HepG2 (cell line): ENCODE measurements at regions of chr7 and their contacts with region 1.

Region 1: DNA sequence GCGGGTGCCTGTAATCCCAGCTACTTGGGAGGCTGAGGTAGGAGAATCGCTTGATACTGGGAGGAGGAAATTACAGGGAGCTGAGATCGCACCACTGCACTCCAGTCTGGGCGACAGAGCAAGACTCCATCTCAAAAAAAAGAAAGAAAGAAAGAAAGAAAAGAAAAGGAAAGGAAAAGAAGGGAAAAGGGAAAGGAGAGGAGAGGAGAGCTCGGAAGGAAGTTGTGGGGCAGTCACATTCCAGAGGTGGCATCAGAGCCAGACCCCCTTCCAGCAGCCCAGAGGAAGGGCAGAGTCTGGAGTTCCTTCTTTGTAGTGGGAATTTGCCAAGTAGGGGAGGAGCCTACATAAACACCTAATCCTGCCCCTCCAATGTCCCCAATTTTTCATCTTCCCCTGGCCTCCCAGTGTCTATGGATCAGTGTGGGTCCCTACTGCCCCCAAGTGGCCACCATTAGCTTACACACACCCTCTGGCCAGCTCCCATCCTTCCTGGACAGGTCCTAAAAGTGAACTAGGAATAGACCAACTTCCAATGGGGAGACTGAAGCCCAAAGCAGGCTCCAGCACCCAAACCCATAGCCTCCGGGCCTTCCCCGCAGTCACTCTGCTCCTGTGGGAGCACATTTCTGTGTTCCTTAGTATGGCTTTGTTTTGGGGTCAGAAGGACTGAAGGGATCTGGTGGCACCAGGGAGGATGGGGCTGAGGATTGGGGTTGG is 39.6 kb upstream of the HSPB1 start:
- DNase-seq: peak; percentile 68
- ATAC-seq: peak; percentile 75
- H3K4me3 ChIP-seq: no peak overlapping the region
- H3K27ac ChIP-seq: no peak overlapping the region
- H3K4me1 ChIP-seq: peaks cover 43% of the 10 kb centered on the region
- H3K27me3 ChIP-seq: no peaks in the 10 kb centered on the region; a peak in 2 of 5 replicates
- CTCF ChIP-seq: peak; percentile 94
- EP300 ChIP-seq: no peak
- POLR2A ChIP-seq: no peak
- RAD21 ChIP-seq: peak; percentile 92

Region 2: GRCh38 chr7:75928331-75928909 is 334.4 kb before region 1 on chr7:
- CTCF ChIA-PET with region 1: no interaction called
- POLR2A ChIA-PET with region 1: no interaction called
- in situ Hi-C with region 1: no loop called
- intact Hi-C with region 1: no loop called
- DNase-seq: no peak
- ATAC-seq: no peak; the same call in 2 of the 3 replicates
- H3K4me3 ChIP-seq: no peak overlapping the region
- H3K27ac ChIP-seq: peak overlapping the region; percentile 9
- H3K4me1 ChIP-seq: peaks cover 63% of the 10 kb centered on the region
- H3K27me3 ChIP-seq: no peaks in the 10 kb centered on the region
- CTCF ChIP-seq: no peak
- EP300 ChIP-seq: no peak
- POLR2A ChIP-seq: no peak
- RAD21 ChIP-seq: no peak

Region 3: GRCh38 chr7:76220185-76221057 is 42.4 kb before region 1 on chr7:
- CTCF ChIA-PET with region 1: interaction called, 10 read pairs
- POLR2A ChIA-PET with region 1: no interaction called
- in situ Hi-C with region 1: loop called (anchors 5 kb)
- intact Hi-C with region 1: loop called (anchors 1 kb)
- DNase-seq: peak; percentile 49
- ATAC-seq: peak; percentile 89
- H3K4me3 ChIP-seq: peak overlapping the region in 1 of 3 experiments; percentile 24; a peak in 1 of 6 replicates
- H3K27ac ChIP-seq: no peak overlapping the region
- H3K4me1 ChIP-seq: peaks cover 10% of the 10 kb centered on the region; the same call in 1 of the 2 replicates
- H3K27me3 ChIP-seq: peaks cover 0 to 17% of the 10 kb centered on the region in 2 experiments; a peak in 2 of 5 replicates
- CTCF ChIP-seq: peak; percentile 95
- EP300 ChIP-seq: no peak
- POLR2A ChIP-seq: no peak
- RAD21 ChIP-seq: peak; percentile 94

Region 4: DNA sequence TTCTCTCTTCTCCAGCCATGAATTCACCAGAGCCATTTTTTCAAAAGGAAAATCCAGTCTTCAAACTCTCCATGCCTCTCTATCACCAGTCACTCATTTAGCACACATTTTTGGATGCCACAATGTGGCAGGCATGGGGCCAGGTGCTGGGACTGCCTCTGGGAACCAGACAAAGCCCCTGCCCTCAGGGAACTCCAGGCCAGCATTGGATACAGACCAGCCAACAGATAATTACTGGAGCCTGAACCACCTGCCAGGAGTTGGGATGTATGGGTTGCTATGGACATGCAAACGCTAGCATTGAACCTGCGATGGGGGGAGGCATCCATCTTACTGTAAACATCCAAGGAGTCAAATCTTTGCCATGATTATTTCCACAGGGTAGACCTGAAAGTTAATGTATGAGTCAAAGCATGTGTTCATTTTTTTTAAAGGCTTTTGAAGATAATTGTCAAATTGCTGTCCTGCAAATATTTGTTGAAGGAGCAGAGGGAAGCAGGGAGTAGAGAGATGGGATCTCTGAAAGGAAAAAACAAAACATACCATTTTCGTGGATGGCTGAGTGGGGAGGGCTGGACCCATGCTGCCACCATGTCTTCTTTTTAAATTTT is 18.0 kb before region 1 on chr7:
- CTCF ChIA-PET with region 1: no interaction called
- POLR2A ChIA-PET with region 1: interaction called, 11 read pairs
- in situ Hi-C with region 1: no loop called
- intact Hi-C with region 1: no loop called
- DNase-seq: peak; percentile 54
- ATAC-seq: no peak
- H3K4me3 ChIP-seq: no peak overlapping the region
- H3K27ac ChIP-seq: no peak overlapping the region
- H3K4me1 ChIP-seq: peaks cover 57% of the 10 kb centered on the region
- H3K27me3 ChIP-seq: no peaks in the 10 kb centered on the region
- CTCF ChIP-seq: no peak
- EP300 ChIP-seq: no peak; a peak in 1 of 4 replicates
- POLR2A ChIP-seq: no peak
- RAD21 ChIP-seq: no peak